Vagina (tissue), 2 donors: ENCODE measurements at regions of chr6 and their contacts with region 1.

Region 1: GRCh38 chr6:137866914-137867684 is at the start of gene TNFAIP3:
- DNase-seq: peak in 1 of 2 donors; percentile 97
- H3K4me3 ChIP-seq: peak within 1 kb of the TSS; percentile 80 to 94
- H3K27ac ChIP-seq: peak within 1 kb of the TSS; percentile 89
- H3K4me1 ChIP-seq: peaks cover 45% of the 10 kb centered on the region
- H3K27me3 ChIP-seq: no peaks in the 10 kb centered on the region
- CTCF ChIP-seq: peak; percentile 14 to 66 (median 58)
- POLR2A ChIP-seq: peak in 1 of 2 donors; percentile 75
- total RNA-seq, gene TNFAIP3: 28.5 TPM

Region 2: DNA sequence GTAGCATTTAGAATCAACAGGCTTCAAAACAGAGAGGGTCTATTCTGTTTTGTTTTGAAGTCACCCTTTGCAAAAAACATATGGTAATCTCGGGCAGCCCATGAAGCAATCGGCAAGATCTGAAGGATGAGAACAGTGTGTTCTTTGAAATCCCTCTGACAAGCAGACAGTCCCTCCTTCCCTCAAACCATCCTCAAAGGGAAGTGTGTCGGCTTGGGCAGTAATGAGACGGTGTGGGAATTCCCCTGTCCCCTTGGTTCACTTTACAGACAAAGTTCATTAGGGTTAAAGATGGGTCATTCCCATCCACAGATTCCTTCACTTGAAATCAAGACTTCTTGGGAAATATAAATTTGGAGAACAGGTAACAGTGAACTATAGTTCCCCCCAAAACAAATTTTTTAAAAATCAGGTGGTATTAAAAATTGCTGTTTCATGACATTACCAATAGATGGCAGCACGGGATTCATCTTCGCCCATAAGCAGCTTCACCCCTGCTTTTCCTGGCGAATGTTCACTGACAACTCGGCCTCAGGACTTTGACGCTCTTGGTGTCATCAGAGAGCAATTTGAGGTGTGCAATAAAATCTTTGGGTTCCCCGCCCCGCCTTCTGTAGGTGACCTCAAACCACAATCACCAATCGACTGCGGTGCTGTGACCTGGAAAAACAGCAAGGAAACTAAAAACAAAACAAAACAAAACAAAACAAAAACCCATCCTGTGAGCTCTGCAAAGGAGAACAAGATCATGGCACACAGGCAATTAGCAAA is 159.3 kb before region 1 on chr6:
- intact Hi-C with region 1: loop called (anchors 5 kb)
- DNase-seq: no peak
- H3K4me3 ChIP-seq: no peak overlapping the region
- H3K27ac ChIP-seq: peak overlapping the region; percentile 30
- H3K4me1 ChIP-seq: no peaks in the 10 kb centered on the region
- H3K27me3 ChIP-seq: no peaks in the 10 kb centered on the region
- CTCF ChIP-seq: peak; percentile 45 to 77 (median 74)
- POLR2A ChIP-seq: no peak